ENCODE measurements at regions of chr2 and their contacts with region 1.

Region 1: DNA sequence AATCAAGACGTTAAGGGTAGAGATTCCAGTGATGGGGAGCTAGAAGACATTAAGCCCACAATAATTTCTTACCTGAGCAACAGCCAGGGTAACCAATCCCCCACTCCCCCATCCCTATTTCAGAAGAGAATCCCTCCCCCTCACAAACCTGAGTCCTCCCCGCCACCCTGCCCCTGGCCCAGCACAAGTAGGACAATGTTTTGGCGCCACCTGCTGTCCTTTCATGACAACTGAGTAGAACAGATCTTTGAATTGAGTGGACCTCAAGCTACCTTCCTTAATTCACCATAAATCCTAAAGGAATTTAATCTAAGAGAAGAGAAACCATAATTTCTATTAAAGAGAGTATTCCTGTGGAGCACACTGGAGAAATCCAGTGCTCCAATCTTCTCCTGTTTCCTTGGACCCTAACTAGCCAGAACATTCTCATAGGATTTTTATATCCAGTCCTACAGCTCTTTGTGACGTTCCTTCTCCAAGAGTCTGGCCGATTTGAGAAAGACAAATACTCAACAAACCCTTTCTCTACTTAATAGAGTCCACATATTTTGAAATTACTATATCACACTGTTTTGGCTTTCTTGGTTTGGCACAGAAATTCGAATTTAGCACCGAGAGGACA is 41.1 kb downstream of the NHEJ1 start:
- DNase-seq: peak in 33 of 35 experiments; percentile 6 to 76 (median 41)
- ATAC-seq: peak in 1 of 4 experiments; percentile 52
- H3K4me3 ChIP-seq: no peak overlapping the region
- H3K4me3 Mint-ChIP-seq: no peak overlapping the region
- H3K27ac ChIP-seq: no peak overlapping the region
- H3K27ac Mint-ChIP-seq: no peak overlapping the region
- H3K4me1 ChIP-seq: peaks cover 0 to 11% of the 10 kb centered on the region in 2 experiments
- H3K4me1 Mint-ChIP-seq: peaks cover 6 to 12% (median 12%) of the 10 kb centered on the region in 3 donors
- H3K27me3 ChIP-seq: no peaks in the 10 kb centered on the region
- H3K27me3 Mint-ChIP-seq: no peaks in the 10 kb centered on the region

Region 2: DNA sequence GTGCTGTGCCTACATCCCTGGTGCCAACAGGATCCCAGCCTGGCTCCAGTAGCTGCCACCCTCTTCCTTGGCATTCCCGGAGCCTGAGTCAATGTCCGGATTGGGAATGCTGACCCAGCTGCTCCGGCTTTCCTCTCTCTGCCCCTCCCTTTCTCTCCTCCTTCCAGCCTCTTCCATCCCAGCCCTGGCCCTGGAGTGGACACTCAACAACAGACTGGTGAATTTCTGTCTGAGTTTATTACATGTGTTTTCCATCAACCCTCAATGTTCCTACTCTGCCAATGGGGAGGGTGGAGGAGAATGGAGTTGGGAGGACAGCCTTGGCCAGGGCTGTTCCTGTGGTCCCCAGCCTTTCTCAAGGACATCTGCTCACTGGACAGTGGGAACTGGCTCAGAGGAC is 287.0 kb before region 1 on chr2:
- CTCF ChIA-PET with region 1: no interaction called
- POLR2A ChIA-PET with region 1: no interaction called
- DNase-seq: no peak
- ATAC-seq: no peak
- H3K4me3 ChIP-seq: no peak overlapping the region
- H3K4me3 Mint-ChIP-seq: no peak overlapping the region
- H3K27ac ChIP-seq: no peak overlapping the region
- H3K27ac Mint-ChIP-seq: no peak overlapping the region
- H3K4me1 ChIP-seq: no peaks in the 10 kb centered on the region
- H3K4me1 Mint-ChIP-seq: no peaks in the 10 kb centered on the region
- H3K27me3 ChIP-seq: peaks cover 3 to 58% of the 10 kb centered on the region in 2 experiments
- H3K27me3 Mint-ChIP-seq: peaks cover 41 to 46% of the 10 kb centered on the region in 2 donors

Region 3: GRCh38 chr2:219029829-219030165 is 89.7 kb before region 1 on chr2:
- CTCF ChIA-PET with region 1: interaction called, 7 to 10 read pairs
- POLR2A ChIA-PET with region 1: no interaction called
- DNase-seq: peak; percentile 44 to 86 (median 68)
- ATAC-seq: peak; percentile 79 to 84 (median 82)
- H3K4me3 ChIP-seq: no peak overlapping the region
- H3K4me3 Mint-ChIP-seq: no peak overlapping the region
- H3K27ac ChIP-seq: no peak overlapping the region
- H3K27ac Mint-ChIP-seq: no peak overlapping the region
- H3K4me1 ChIP-seq: no peaks in the 10 kb centered on the region
- H3K4me1 Mint-ChIP-seq: no peaks in the 10 kb centered on the region
- H3K27me3 ChIP-seq: peaks cover 0 to 52% of the 10 kb centered on the region in 2 experiments
- H3K27me3 Mint-ChIP-seq: peaks cover 27 to 34% of the 10 kb centered on the region in 2 donors

Region 4: GRCh38 chr2:219057709-219058540 is 61.6 kb before region 1 on chr2:
- CTCF ChIA-PET with region 1: interaction called, 7 to 11 read pairs
- POLR2A ChIA-PET with region 1: no interaction called
- DNase-seq: peak; percentile 42 to 84 (median 66)
- ATAC-seq: peak; percentile 92 to 96 (median 94)
- H3K4me3 ChIP-seq: peak overlapping the region in 1 of 2 donors; percentile 53
- H3K4me3 Mint-ChIP-seq: peak overlapping the region; percentile 43 to 70 (median 57)
- H3K27ac ChIP-seq: no peak overlapping the region
- H3K27ac Mint-ChIP-seq: no peak overlapping the region
- H3K4me1 ChIP-seq: peaks cover 0 to 38% of the 10 kb centered on the region in 2 experiments
- H3K4me1 Mint-ChIP-seq: peaks cover 16 to 32% (median 26%) of the 10 kb centered on the region in 3 donors
- H3K27me3 ChIP-seq: peaks cover 21 to 75% of the 10 kb centered on the region in 2 experiments
- H3K27me3 Mint-ChIP-seq: peaks cover 46 to 77% of the 10 kb centered on the region in 2 donors

Region 5: DNA sequence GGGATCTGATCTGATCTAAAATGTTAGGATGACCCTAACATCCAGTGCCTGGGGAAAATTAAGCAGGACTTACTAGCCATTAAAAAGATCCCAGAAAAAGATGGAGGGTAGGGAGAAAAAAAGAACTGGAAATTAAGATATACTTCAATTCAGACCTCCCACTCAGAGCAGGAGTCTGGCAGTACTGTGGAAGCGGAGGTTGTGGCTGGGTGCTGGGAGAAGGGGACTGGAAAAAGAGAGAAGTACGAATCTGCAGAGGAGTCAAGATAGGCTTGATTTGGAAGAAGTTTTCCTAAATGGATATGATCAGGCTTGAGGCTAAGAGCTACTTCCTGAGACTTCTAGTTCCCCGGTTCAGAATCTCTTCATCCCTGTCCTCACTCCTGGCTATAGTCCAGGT is 25.4 kb before region 1 on chr2:
- CTCF ChIA-PET with region 1: no interaction called
- POLR2A ChIA-PET with region 1: no interaction called
- DNase-seq: no peak
- ATAC-seq: no peak
- H3K4me3 ChIP-seq: no peak overlapping the region
- H3K4me3 Mint-ChIP-seq: no peak overlapping the region
- H3K27ac ChIP-seq: no peak overlapping the region
- H3K27ac Mint-ChIP-seq: no peak overlapping the region
- H3K4me1 ChIP-seq: no peaks in the 10 kb centered on the region
- H3K4me1 Mint-ChIP-seq: no peaks in the 10 kb centered on the region
- H3K27me3 ChIP-seq: no peaks in the 10 kb centered on the region
- H3K27me3 Mint-ChIP-seq: no peaks in the 10 kb centered on the region

Region 6: GRCh38 chr2:219104107-219105035 is 15.2 kb before region 1 on chr2:
- CTCF ChIA-PET with region 1: interaction called, 6 to 12 read pairs
- POLR2A ChIA-PET with region 1: no interaction called
- DNase-seq: peak in 1 of 35 experiments; percentile 55
- ATAC-seq: peak in 1 of 4 experiments; percentile 38
- H3K4me3 ChIP-seq: no peak overlapping the region
- H3K4me3 Mint-ChIP-seq: no peak overlapping the region
- H3K27ac ChIP-seq: no peak overlapping the region
- H3K27ac Mint-ChIP-seq: no peak overlapping the region
- H3K4me1 ChIP-seq: peaks cover 0 to 1% of the 10 kb centered on the region in 2 experiments
- H3K4me1 Mint-ChIP-seq: peaks cover 20 to 37% (median 33%) of the 10 kb centered on the region in 3 donors
- H3K27me3 ChIP-seq: no peaks in the 10 kb centered on the region
- H3K27me3 Mint-ChIP-seq: no peaks in the 10 kb centered on the region